ENCODE measurements at regions of chr15 and their contacts with region 1.

Region 1: GRCh38 chr15:45402162-45402954 is 24.0 kb upstream of the GATM start:
- DNase-seq: peak; percentile 91
- ATAC-seq: peak; percentile 97
- H3K4me3 Mint-ChIP-seq: peak overlapping the region; percentile 95
- H3K27ac Mint-ChIP-seq: no peak overlapping the region
- H3K4me1 Mint-ChIP-seq: peaks cover 18% of the 10 kb centered on the region
- H3K27me3 Mint-ChIP-seq: peaks cover 7% of the 10 kb centered on the region
- CTCF ChIP-seq: no peak

Region 2: DNA sequence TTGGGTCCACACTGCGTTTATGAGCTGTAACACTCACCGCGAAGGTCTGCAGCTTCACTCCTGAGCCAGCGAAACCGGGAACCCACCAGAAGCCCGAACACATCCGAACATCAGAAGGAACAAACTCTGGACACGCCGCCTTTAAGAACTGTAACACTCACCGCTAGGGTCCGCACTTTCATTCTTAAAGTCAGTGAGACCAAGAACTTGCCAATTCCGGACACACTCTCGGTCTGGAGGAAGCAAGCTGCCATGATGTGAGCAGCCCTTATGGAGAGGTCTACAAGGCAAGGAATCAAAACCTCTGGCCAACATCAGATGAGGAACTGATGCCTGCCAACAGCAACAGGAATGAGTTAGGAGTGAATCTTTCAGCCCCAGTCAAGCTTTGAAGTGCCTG is 87.4 kb before region 1 on chr15:
- CTCF ChIA-PET with region 1: interaction called, 14 read pairs
- POLR2A ChIA-PET with region 1: no interaction called
- DNase-seq: peak; percentile 59
- ATAC-seq: peak; percentile 79
- H3K4me3 Mint-ChIP-seq: no peak overlapping the region
- H3K27ac Mint-ChIP-seq: no peak overlapping the region
- H3K4me1 Mint-ChIP-seq: no peaks in the 10 kb centered on the region
- H3K27me3 Mint-ChIP-seq: peaks cover 14% of the 10 kb centered on the region
- CTCF ChIP-seq: no peak

Region 3: DNA sequence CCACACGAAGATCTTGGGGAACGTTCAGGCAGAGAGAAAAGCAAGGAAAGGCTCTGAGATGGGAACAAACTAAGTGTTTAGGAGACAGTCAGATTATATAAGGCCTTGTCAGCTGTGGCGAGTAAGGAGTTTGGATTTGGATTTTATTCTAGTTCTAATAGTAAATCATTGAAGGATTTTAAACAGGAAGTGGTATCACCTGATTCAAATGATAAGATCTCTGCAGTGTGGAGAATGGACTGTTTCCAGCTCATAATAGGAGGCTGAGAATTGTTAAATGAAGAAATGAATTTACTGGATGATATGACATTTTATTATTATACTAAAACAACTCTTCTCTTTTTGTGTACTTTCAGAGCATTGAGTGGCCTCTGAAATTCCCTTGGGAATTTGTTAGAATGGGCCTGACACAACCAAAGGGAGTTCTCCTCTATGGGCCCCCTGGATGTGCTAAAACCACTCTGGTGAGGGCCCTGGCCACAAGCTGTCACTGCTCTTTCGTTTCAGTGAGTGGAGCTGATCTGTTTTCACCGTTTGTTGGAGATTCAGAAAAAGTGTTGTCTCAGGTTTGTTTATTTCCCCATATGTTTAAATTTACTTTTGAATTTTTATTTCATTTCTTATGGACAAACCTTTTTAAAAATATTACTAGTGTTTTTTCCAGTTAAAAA is 12.0 kb after region 1 on chr15:
- CTCF ChIA-PET with region 1: no interaction called
- POLR2A ChIA-PET with region 1: no interaction called
- DNase-seq: no peak
- ATAC-seq: no peak
- H3K4me3 Mint-ChIP-seq: no peak overlapping the region
- H3K27ac Mint-ChIP-seq: no peak overlapping the region
- H3K4me1 Mint-ChIP-seq: no peaks in the 10 kb centered on the region
- H3K27me3 Mint-ChIP-seq: no peaks in the 10 kb centered on the region
- CTCF ChIP-seq: no peak

Region 4: DNA sequence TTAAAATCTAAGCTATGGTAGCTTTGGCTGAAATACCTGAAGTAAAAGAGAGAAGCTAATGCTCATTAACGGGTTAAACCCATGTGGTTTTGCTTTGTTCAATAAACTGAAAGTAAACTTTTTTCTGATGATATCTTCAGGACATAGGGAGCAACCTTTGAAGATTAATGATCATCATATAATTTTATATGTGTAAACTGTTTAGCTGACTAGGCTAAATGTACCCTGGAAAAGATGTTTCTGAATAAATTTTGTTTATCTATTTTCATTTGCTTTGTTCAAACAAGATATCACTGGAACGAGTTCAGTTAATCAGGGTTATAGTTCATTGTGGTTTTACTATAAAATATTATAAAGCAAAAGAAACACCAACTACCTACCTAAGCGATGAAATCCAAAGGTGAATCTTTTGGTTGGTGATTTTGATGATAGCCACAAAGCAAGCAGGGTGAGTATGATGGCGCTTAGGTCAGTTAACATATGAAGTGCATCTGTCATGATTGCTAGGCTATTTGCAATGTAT is 108.5 kb after region 1 on chr15:
- CTCF ChIA-PET with region 1: no interaction called
- POLR2A ChIA-PET with region 1: no interaction called
- DNase-seq: no peak
- ATAC-seq: no peak
- H3K4me3 Mint-ChIP-seq: no peak overlapping the region
- H3K27ac Mint-ChIP-seq: no peak overlapping the region
- H3K4me1 Mint-ChIP-seq: peaks cover 4% of the 10 kb centered on the region
- H3K27me3 Mint-ChIP-seq: peaks cover 39% of the 10 kb centered on the region
- CTCF ChIP-seq: no peak

Region 5: GRCh38 chr15:45587095-45587860 is 184.9 kb after region 1 on chr15 and contains the start of gene BLOC1S6:
- CTCF ChIA-PET with region 1: interaction called, 3 read pairs
- POLR2A ChIA-PET with region 1: interaction called, 11 read pairs
- DNase-seq: peak; percentile 88
- ATAC-seq: peak; percentile 95
- H3K4me3 Mint-ChIP-seq: peak within 1 kb of the TSS; percentile 98
- H3K27ac Mint-ChIP-seq: peak within 1 kb of the TSS; percentile 100
- H3K4me1 Mint-ChIP-seq: peaks cover 19% of the 10 kb centered on the region
- H3K27me3 Mint-ChIP-seq: peaks cover 4% of the 10 kb centered on the region; the same call in 1 of the 2 replicates
- CTCF ChIP-seq: no peak
- total RNA-seq, gene BLOC1S6: 28.7 to 31.6 TPM (median 29.1 TPM) in 3 replicates